GM13977 (cell line): ENCODE measurements at regions of chr4 and their contacts with region 1.

Region 1: DNA sequence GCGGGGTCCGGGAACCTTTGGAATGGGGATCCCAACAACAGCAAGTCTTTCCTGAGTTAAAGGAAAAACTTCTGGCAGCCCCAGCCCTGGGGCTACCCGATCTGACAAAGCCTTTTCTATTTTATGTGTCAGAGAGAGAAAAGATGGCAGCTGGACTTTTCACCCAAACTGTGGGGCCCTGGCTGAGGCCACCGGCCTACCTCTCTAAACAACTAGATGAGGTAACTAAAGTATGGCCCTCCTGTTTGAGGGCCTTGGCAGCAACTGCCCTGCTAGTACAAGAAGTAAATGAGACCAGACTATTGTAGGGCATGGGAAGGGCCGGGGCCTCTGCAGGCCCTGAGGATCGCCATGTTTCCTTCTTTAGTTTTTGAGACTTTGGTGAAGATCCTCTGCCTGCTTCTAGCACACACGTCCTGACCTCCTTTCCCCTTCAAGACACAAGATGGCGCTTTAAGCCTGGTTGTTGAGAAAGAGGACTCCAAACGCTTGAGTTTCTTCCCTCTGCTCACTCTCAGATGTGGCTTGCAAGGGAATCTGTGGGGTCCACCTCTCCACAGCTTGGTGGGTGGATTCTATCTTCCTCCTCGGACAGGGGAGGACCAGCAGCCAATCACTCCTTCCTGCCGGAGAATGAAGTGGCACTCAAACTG is 18.5 kb upstream of the DRD5 start:
- DNase-seq: peak; percentile 82
- CTCF ChIP-seq: peak; percentile 85

Region 2: DNA sequence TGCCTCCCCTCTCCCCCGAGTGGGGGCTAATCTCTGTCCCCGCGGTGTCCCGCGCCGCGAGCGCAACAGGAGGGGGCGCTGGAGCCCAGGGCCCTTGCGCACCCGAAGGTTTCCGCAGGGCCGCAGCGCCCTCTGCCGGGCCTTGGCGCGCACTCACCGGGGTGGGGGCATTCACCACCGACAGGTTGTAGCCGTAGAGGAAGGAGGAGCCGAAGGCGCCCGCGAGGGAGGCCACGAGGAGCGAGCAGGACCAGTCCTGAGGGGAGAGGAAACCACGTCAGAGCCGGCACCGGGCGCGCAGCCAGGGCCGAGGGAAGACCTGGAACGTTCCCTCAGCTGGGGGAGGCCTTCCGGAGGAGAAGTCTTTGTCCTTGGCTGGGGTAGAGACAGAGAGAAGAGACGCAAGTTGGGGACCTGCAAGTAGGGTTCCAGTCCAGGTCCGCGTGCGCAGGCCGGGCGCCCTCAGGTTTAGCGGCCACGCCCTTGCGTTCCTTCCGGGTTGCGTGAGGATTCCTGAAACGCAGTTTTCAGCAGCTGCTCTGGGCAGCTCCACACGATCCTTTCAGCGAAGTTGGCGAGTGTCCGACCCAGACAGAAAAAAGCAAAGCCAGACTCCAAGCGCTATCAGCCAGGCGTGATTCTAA is 256.0 kb after region 1 on chr4:
- in situ Hi-C with region 1: loop called (anchors 5 kb)
- DNase-seq: peak; percentile 94
- CTCF ChIP-seq: peak; percentile 100

Region 3: GRCh38 chr4:10366628-10367027 is 603.7 kb after region 1 on chr4:
- in situ Hi-C with region 1: no loop called
- DNase-seq: no peak
- CTCF ChIP-seq: no peak

Region 4: GRCh38 chr4:10403633-10404445 is 640.9 kb after region 1 on chr4:
- in situ Hi-C with region 1: loop called (anchors 25 kb)
- DNase-seq: peak; percentile 38
- CTCF ChIP-seq: peak; percentile 36